ENCODE measurements at regions of chr18 and their contacts with region 1.

Region 1: DNA sequence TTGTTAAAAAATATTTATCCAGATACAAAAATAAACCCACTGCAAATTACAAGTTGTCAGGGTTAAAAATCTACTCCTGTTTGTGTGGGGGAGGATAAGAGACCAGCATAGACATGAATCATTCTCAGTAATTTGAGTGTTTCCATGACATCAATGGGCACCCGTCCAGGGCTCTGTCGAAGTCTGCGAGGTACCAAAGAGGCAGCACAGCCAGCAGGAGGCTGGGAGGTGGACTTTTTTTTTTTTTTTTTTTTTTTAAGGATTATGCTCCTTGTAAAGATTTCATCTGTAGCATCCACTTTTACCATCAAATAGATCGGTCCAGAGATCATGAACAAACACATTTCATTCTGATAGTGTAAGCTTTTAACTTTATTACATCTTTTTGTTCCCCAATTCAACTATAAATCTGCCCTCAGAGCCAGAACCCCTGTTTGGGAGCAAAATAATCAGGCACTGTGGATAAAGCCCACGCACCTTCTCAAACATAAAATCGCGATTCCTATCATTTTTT is 182.0 kb downstream of the TCF4 start:
- DNase-seq: peak; percentile 83 to 96 (median 92)
- H3K4me3 ChIP-seq: no peak overlapping the region
- H3K27ac ChIP-seq: peak overlapping the region in 1 of 2 donors; percentile 76
- H3K4me1 ChIP-seq: peaks cover 4% of the 10 kb centered on the region
- H3K27me3 ChIP-seq: no peaks in the 10 kb centered on the region
- CTCF ChIP-seq: no peak
- EP300 ChIP-seq: no peak
- POLR2A ChIP-seq: no peak

Region 2: DNA sequence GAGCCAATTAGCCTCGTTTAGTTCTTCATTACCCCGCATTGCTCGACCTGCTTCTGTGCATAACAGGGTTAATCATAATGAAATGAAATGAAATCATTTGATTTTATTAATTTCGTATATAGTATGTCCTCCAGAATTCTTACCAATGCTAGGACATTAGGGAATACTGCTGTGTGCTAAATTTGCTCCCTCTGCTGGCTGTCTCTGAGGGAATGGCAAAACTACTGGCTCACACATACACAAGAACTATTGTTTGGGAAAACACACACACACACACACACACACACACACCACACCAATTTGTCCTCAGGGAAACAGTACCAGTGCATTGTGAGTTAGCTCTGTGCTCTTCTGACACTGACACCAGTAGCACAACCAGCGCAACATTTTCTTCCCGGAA is 455.3 kb after region 1 on chr18:
- intact Hi-C with region 1: loop called in 1 of 4 experiments (anchors 10 kb)
- DNase-seq: no peak
- H3K4me3 ChIP-seq: no peak overlapping the region
- H3K27ac ChIP-seq: no peak overlapping the region
- H3K4me1 ChIP-seq: peaks cover 4% of the 10 kb centered on the region
- H3K27me3 ChIP-seq: no peaks in the 10 kb centered on the region
- CTCF ChIP-seq: no peak
- EP300 ChIP-seq: no peak
- POLR2A ChIP-seq: no peak

Region 3: DNA sequence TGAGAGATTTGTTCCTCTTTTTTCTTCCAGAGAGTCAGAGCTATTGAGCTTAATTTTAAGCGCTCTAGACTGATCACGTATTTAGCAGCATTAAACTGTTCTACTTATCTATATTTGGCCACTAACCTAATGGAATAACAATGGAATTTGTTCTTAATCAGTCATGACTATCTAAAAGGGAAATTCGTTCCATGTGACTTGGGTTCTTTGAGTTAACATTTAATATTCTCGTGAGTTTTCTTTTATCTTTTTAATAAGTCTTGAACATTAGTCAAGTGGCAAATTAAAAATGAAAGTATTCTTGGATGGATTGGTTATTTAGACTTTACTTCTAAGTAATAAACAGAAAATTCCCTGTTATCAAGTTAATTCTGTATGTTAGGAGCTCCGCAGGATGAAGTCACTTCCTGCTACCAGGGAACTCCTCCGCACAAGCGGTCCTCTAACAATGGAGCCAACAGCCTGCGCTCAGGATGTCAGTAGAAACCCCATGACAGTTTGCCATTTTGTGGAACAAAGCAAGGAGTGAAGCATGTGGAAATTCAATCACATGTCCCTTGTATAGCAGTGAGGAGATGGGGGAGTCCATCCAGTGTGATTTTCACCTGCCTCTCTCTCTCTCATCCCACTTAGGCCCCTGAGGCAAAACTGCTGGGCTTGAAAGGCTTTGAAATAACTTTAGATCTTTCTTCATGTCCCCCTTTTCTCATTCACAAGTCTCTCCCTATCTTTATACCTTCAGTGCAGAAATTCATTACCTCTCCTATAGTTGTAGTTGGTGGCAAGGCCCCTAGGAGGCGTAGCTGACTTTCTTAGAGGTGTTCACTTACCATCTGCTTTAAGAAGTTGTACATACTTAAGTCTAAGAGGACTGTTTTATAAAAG is 1383.3 kb after region 1 on chr18:
- intact Hi-C with region 1: no loop called
- DNase-seq: no peak
- H3K4me3 ChIP-seq: no peak overlapping the region
- H3K27ac ChIP-seq: no peak overlapping the region
- H3K4me1 ChIP-seq: no peaks in the 10 kb centered on the region
- H3K27me3 ChIP-seq: no peaks in the 10 kb centered on the region
- CTCF ChIP-seq: no peak
- EP300 ChIP-seq: no peak
- POLR2A ChIP-seq: no peak